Endothelial cell of umbilical vein (primary cell): ENCODE measurements at regions of chr9 and their contacts with region 1.

Region 1: DNA sequence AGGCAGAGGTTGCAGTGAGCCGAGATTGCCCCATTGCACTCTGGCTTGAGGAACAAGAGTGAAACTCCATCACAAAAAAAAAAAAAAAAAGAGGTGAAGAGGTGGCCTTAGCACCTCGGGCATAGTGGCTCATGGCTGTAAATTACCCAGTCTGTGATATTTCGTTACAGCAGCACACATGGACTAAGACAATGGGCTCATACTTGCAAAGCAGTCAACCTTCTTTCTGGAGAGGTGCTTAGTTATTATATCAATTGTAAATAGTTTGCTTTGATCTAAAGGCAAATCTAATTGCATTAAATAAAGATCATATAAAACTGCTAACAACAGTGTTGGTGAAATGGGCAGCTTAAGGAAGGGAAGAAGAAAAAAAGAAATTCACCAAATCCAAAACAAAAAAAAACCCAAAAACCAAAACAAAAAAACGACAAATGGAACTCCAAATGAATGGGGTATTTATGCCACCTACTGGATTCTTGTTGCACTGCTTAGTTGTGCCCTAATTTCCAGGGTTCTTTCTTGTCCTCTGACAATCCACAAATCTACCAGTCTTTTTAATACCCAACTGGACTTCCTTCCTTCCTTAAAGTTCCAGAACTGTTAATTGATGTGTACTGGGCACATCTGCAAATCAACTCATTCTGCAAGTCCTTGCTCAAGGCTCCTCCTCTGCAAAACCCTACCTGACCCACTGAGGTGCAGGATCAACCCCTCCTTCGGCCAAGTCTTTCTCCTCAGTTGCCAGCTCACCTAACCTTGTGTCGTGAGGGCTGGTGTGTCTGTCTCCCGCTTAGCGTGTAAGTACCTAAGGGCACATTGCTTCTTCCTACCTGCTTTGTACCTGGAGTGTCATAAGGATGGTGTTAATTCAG is 35.0 kb upstream of the DMRT1 start:
- DNase-seq: peak; percentile 50
- H3K4me3 ChIP-seq: no peak overlapping the region
- H3K27ac ChIP-seq: no peak overlapping the region
- H3K4me1 ChIP-seq: peaks cover 33% of the 10 kb centered on the region
- H3K27me3 ChIP-seq: no peaks in the 10 kb centered on the region
- CTCF ChIP-seq: peak; percentile 56 to 68
- POLR2A ChIP-seq: no peak

Region 2: GRCh38 chr9:385818-386398 is 420.6 kb before region 1 on chr9:
- CTCF ChIA-PET with region 1: interaction called, 3 read pairs
- POLR2A ChIA-PET with region 1: no interaction called
- dilution Hi-C with region 1: no loop called
- intact Hi-C with region 1: loop called (anchors 1 kb)
- DNase-seq: peak; percentile 76
- H3K4me3 ChIP-seq: no peak overlapping the region
- H3K27ac ChIP-seq: no peak overlapping the region
- H3K4me1 ChIP-seq: no peaks in the 10 kb centered on the region
- H3K27me3 ChIP-seq: no peaks in the 10 kb centered on the region
- CTCF ChIP-seq: peak; percentile 73 to 79
- POLR2A ChIP-seq: no peak

Region 3: DNA sequence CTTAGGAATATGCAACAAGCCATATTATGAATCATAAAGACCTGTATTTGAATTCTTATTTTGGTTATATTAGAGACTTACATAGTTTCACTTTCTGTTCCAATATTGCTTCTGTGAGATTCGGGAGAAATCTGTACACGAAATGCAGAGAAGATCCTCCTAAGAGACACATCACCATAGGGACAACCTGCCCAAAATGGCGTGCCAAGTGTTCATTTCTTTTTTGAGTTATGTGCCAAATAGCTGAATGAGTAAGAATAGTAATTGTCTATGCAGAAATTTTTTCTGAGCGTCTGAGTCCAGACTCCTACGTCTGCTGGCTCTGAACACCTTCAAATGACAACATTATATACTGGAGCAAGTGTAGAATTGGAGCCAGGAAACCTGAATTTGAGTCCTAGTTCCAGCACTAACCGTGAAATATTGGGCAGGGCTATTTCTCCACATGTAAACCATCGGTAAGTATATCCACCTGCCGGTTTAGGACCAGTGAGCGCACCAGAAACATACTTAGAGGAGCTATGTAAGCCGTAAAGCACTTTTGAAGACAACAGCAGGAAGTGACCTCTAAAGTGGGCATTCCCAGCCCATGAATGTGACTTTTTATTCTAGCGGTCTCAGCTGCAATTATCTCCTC is 128.9 kb before region 1 on chr9:
- CTCF ChIA-PET with region 1: no interaction called
- POLR2A ChIA-PET with region 1: no interaction called
- dilution Hi-C with region 1: no loop called
- intact Hi-C with region 1: loop called (anchors 2 kb)
- DNase-seq: peak; percentile 74
- H3K4me3 ChIP-seq: peak overlapping the region; percentile 20 to 55 (median 29)
- H3K27ac ChIP-seq: peak overlapping the region; percentile 44
- H3K4me1 ChIP-seq: peaks cover 26% of the 10 kb centered on the region
- H3K27me3 ChIP-seq: no peaks in the 10 kb centered on the region
- CTCF ChIP-seq: no peak
- POLR2A ChIP-seq: peak; percentile 42

Region 4: GRCh38 chr9:693201-694091 is 113.1 kb before region 1 on chr9:
- CTCF ChIA-PET with region 1: interaction called, 3 read pairs
- POLR2A ChIA-PET with region 1: no interaction called
- dilution Hi-C with region 1: no loop called
- intact Hi-C with region 1: loop called (anchors 1 kb)
- DNase-seq: peak; percentile 92
- H3K4me3 ChIP-seq: peak overlapping the region in 2 of 3 experiments; percentile 18 to 67
- H3K27ac ChIP-seq: peak overlapping the region; percentile 86
- H3K4me1 ChIP-seq: peaks cover 66% of the 10 kb centered on the region
- H3K27me3 ChIP-seq: no peaks in the 10 kb centered on the region
- CTCF ChIP-seq: no peak
- POLR2A ChIP-seq: peak; percentile 72

Region 5: DNA sequence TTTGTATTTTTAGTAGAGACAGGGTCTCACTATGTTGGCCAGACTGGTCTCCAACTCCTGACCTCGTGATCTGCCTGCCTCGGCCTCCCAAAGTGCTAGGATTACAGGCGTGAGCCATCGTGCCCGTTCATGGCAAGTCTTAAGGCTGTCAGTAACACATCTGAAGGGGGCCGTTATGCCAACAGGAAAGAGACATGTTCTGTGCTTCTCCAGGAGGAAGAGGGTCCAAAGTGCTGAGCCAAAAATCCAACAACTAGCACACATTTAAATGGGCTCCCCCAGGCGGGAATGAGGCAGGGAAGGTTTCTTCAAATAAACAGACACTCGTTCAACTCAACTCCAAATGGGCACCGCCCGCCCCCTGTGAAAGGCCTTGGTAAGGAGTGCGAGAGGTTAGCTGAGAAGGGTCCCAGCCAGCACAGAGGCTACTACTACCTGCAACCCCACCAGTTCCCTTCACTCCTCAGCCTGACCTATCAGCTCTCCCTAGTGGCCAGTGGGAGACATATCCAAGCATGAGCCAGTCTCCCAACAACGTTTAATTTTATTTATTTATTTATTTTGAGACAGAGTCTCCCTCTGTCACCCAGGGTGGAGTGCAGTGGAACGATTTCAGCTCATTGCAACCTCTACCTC is 49.2 kb before region 1 on chr9:
- CTCF ChIA-PET with region 1: interaction called, 11 read pairs
- POLR2A ChIA-PET with region 1: no interaction called
- dilution Hi-C with region 1: no loop called
- intact Hi-C with region 1: loop called (anchors 5 kb)
- DNase-seq: peak; percentile 67
- H3K4me3 ChIP-seq: no peak overlapping the region
- H3K27ac ChIP-seq: no peak overlapping the region
- H3K4me1 ChIP-seq: peaks cover 24% of the 10 kb centered on the region
- H3K27me3 ChIP-seq: no peaks in the 10 kb centered on the region
- CTCF ChIP-seq: peak; percentile 42 to 66
- POLR2A ChIP-seq: no peak

Region 6: DNA sequence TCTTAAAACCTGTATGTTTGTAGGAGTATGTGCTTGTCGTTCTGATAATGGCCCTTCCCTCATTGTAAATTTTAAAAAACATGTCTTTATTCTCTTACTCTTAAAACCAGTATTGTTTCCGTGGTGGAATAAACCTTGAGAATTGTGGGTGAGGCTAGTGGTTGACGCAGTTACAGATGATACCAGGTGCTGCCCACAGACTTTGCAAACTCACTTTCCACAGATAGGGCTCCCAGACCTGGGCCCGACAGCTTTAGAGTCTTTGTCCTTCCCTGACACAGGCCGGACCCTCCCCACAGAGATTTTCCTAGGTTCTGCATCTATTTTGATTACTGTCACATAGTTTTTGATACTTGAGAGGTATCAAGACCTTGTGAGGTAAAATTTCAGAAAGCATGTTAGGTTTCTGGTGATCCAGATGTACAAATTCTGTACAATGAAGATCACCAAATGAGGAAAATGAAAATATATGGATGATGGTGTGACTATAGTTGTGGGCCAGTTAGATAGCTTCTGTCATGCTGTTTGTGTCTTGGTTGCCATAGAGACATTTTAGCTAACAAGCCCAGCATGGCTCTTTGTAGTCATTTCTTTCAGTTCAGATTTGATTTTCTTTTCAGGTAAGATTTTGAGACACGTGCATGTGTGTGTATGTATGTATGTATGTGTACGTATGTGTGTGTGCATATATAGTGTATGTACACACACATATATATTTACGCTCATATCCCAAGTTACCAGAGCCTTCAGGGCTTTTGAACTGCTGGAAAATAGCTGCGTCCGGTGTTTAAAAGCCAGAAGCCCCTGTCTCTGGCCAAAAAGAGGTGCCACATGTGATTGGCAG is 68.8 kb after region 1 on chr9:
- CTCF ChIA-PET with region 1: no interaction called
- POLR2A ChIA-PET with region 1: no interaction called
- dilution Hi-C with region 1: no loop called
- intact Hi-C with region 1: no loop called
- DNase-seq: no peak
- H3K4me3 ChIP-seq: no peak overlapping the region
- H3K27ac ChIP-seq: no peak overlapping the region
- H3K4me1 ChIP-seq: no peaks in the 10 kb centered on the region
- H3K27me3 ChIP-seq: no peaks in the 10 kb centered on the region
- CTCF ChIP-seq: no peak
- POLR2A ChIP-seq: no peak

Region 7: DNA sequence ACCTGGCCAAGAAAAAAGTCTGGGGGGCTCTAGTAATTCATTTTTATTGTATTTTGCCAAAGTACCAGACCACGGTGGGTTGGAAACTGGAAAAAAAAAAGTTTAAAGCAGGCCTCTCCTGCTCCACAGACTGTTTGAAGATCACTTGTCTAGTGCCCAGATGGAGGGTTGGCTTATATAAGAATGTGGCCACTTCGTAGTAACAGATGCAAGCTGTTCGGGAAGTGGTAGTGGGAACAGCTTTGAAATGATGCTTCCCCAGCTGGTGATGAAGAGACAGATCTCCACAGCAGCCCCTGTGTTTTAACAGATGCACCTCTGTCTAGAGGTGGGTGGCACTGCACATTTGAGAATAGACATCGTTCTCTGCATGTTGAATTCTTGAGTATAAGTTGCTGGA is 115.7 kb after region 1 on chr9:
- CTCF ChIA-PET with region 1: no interaction called
- POLR2A ChIA-PET with region 1: no interaction called
- dilution Hi-C with region 1: no loop called
- intact Hi-C with region 1: no loop called
- DNase-seq: no peak
- H3K4me3 ChIP-seq: no peak overlapping the region
- H3K27ac ChIP-seq: no peak overlapping the region
- H3K4me1 ChIP-seq: no peaks in the 10 kb centered on the region
- H3K27me3 ChIP-seq: no peaks in the 10 kb centered on the region
- CTCF ChIP-seq: no peak
- POLR2A ChIP-seq: no peak